Calu3 (cell line): ENCODE measurements at regions of chr3 and their contacts with region 1.

Region 1: GRCh38 chr3:171334465-171334811 is 125.8 kb downstream of the TNIK start:
- DNase-seq: peak; percentile 57
- H3K4me3 Mint-ChIP-seq: peak overlapping the region; percentile 10
- H3K27ac Mint-ChIP-seq: peak overlapping the region; percentile 55
- H3K4me1 Mint-ChIP-seq: peaks cover 44% of the 10 kb centered on the region
- H3K27me3 Mint-ChIP-seq: no peaks in the 10 kb centered on the region
- CTCF ChIP-seq: no peak

Region 2: DNA sequence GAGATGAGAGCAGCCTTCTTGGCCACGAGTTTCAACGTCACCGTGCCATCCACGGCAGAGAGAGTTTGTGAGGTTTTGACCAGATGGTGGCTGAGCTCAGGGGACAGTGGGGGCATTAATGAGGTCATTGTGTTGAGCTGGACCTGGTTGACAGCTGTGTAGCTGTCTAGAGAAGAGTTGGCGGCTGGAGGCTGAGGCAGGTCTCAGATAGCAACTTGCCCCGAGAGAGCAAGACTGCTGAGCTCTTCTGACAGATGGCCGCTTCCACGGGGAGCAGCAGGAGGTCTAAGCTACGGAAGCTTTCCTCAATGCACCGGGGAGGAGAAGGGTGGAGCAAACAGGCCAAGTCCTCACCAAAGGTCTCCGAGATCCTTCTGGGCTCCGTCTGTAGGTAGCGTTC is 381.2 kb before region 1 on chr3:
- CTCF ChIA-PET with region 1: no interaction called
- intact Hi-C with region 1: loop called (anchors 10 kb)
- DNase-seq: no peak
- H3K4me3 Mint-ChIP-seq: no peak overlapping the region
- H3K27ac Mint-ChIP-seq: no peak overlapping the region
- H3K4me1 Mint-ChIP-seq: no peaks in the 10 kb centered on the region
- H3K27me3 Mint-ChIP-seq: no peaks in the 10 kb centered on the region
- CTCF ChIP-seq: no peak

Region 3: GRCh38 chr3:171407759-171408158 is 73.3 kb after region 1 on chr3:
- CTCF ChIA-PET with region 1: interaction called, 10 read pairs
- intact Hi-C with region 1: no loop called
- DNase-seq: no peak
- H3K4me3 Mint-ChIP-seq: no peak overlapping the region
- H3K27ac Mint-ChIP-seq: no peak overlapping the region
- H3K4me1 Mint-ChIP-seq: no peaks in the 10 kb centered on the region
- H3K27me3 Mint-ChIP-seq: no peaks in the 10 kb centered on the region
- CTCF ChIP-seq: no peak